Ovary (tissue), 10 donors: ENCODE measurements at regions of chr14 and their contacts with region 1.

Region 1: DNA sequence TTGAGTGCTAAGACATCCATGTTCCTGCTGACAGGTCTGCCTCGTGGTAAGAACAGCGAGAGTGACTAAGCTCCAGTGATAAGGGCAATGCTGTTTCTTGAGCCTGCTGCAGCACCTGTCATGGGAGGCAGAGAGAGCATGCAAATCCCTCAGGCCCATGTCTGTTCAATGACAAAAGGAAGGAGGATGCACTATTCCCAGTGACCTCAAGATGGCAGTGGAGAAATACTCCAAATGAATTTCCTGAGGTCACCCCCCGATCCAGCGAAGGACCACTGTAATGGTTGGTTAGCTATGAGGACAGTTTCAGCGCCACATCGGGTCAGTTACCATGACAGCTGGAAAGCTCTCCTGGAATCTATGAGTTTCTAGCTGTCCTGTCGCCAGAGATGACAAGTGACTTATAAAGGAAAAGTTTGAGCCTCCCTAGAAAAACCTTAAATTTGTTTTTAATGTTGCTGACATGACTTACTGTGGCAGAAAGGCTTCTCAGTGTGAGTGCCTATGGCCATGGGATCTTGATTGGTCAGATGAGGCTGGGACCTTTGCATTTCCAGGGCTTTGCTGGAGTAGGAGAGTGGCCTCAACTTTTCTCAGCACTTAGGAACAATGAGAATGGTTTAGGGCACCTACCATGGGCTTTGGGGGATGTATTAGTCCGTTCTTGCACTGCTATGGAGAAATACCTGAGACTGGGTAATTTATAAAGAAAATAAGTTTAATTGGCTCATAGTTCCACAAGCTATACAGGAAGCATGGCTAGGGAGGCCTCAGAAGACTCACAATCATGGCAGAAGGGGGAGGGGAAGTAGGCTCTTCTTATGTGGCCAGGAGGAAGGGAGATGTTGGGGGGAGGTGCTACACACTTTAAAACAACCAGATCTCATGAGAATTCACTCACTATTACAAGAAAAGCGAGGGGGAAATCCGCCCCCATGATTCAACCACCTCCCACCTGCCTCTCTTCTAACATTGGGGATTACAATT is 88.0 kb upstream of the TMEM260 start:
- DNase-seq: peak in 4 of 5 donors; percentile 18 to 41 (median 34)
- H3K4me3 ChIP-seq: no peak overlapping the region
- H3K27ac ChIP-seq: no peak overlapping the region
- H3K4me1 ChIP-seq: no peaks in the 10 kb centered on the region
- H3K27me3 ChIP-seq: no peaks in the 10 kb centered on the region
- CTCF ChIP-seq: peak; percentile 35 to 54 (median 43)
- EP300 ChIP-seq: no peak
- POLR2A ChIP-seq: no peak

Region 2: DNA sequence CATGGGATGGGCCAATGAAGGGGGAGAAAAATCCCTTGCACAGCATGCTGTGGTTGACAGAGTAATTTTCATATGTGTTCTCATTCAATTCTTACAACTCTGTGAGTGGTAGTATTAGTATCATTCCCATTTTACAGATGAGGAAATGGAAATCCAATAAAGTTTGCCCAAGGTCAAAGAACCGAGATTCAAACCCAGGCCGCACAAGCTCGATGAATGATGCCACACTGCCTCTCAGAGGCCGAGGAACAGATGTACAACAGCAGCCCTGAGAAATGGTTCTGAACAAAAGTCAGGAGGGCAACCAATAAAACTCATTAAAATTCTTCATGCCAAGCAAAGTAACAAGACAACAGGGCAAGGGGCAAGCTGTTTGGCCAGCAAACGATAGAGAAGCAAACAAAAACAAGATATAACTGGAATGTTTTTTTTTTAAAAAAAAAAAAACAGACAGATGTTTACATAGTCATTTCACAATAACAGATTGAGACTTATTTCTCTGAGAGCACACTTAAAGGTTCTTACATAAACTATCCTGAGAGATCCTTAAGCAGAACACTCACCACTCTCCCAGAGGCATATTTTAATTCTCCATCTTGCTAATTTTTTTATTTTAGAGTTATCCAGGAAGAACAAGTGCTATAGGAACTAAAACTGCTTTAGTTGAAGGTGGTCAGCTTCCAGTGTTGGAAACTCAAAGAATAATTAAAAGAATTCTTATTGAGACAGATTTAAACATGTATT is 691.3 kb after region 1 on chr14:
- intact Hi-C with region 1: loop called in 1 of 4 experiments (anchors 10 kb)
- DNase-seq: peak; percentile 13 to 56 (median 36)
- H3K4me3 ChIP-seq: no peak overlapping the region
- H3K27ac ChIP-seq: peak overlapping the region in 1 of 2 donors; percentile 14
- H3K4me1 ChIP-seq: peaks cover 3% of the 10 kb centered on the region
- H3K27me3 ChIP-seq: no peaks in the 10 kb centered on the region
- CTCF ChIP-seq: no peak
- EP300 ChIP-seq: no peak
- POLR2A ChIP-seq: no peak

Region 3: DNA sequence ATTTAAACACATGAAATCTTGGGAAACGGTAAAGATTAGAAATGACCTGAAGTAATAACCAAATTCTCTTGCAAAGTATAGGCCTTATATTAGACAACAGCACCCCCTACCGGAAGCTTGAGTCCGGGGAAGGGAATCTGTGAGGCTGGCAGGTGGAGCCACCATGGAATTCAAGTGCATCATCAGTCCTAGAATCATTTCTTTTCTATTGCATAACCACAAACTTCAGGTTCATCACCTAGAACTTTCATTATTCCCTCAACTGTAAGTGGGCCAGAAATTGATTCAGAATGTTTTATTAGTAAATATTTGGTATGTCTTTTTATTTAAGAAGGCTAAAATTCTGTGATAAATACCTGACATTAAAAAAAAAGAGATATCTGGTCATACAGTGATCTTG is 825.7 kb after region 1 on chr14:
- intact Hi-C with region 1: loop called in 3 of 4 experiments (anchors 10 kb)
- DNase-seq: peak; percentile 50 to 74 (median 57)
- H3K4me3 ChIP-seq: no peak overlapping the region
- H3K27ac ChIP-seq: no peak overlapping the region
- H3K4me1 ChIP-seq: no peaks in the 10 kb centered on the region
- H3K27me3 ChIP-seq: no peaks in the 10 kb centered on the region
- CTCF ChIP-seq: peak; percentile 20 to 40 (median 40)
- EP300 ChIP-seq: no peak
- POLR2A ChIP-seq: no peak

Region 4: DNA sequence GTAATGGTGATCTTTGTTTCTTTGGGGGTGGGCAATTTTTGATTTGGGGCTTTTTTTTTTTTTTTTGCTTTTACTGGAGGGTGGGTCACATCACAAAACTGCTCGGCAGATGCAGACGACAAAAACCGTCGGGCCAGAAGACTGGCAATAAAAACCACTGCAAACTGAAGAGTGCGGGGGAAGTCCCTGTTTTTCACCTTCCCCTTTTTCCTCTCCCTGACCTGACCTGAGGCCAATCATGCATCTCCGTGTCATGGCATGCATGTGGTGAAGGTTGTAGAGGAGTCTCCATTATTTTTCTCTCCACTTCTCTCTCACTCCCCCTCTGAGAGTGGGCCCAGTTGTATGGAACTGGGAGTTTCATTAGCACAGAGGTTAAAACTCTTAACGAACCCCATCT is 834.7 kb after region 1 on chr14:
- intact Hi-C with region 1: loop called in 1 of 4 experiments (anchors 10 kb)
- DNase-seq: no peak
- H3K4me3 ChIP-seq: no peak overlapping the region
- H3K27ac ChIP-seq: no peak overlapping the region
- H3K4me1 ChIP-seq: no peaks in the 10 kb centered on the region
- H3K27me3 ChIP-seq: no peaks in the 10 kb centered on the region
- CTCF ChIP-seq: no peak
- EP300 ChIP-seq: no peak
- POLR2A ChIP-seq: no peak